ENCODE measurements at regions of chr11 and their contacts with region 1.

Region 1: DNA sequence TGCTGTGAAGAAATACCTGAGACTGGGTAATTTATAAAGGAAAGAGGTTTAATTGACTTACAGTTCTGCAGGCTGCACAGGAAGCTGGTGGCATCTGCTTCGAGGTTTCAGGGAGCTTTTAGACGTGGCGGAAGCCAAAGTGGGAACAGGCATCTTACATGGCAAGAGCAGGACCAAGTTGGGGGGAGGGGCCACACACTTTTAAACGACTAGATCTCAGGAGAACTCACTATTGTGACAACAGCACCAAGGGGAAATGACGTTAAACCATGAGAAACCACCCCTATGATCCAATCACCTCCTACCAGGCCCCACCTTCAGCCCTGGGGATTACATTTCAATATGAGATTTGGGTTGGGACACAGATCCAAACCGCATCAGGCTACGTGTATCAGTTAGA is 11.1 kb upstream of the SCGB1D4 start:
- DNase-seq: no peak
- ATAC-seq: no peak
- H3K4me3 Mint-ChIP-seq: no peak overlapping the region
- H3K27ac Mint-ChIP-seq: no peak overlapping the region
- H3K4me1 Mint-ChIP-seq: peaks cover 9% of the 10 kb centered on the region
- H3K27me3 Mint-ChIP-seq: peaks cover 35% of the 10 kb centered on the region
- CTCF ChIP-seq: no peak

Region 2: GRCh38 chr11:62169091-62169847 is 140.7 kb before region 1 on chr11:
- CTCF ChIA-PET with region 1: interaction called, 30 read pairs
- POLR2A ChIA-PET with region 1: no interaction called
- intact Hi-C with region 1: loop called (anchors 5 kb)
- DNase-seq: no peak
- ATAC-seq: no peak
- H3K4me3 Mint-ChIP-seq: no peak overlapping the region
- H3K27ac Mint-ChIP-seq: no peak overlapping the region
- H3K4me1 Mint-ChIP-seq: peaks cover 4% of the 10 kb centered on the region
- H3K27me3 Mint-ChIP-seq: peaks cover 22% of the 10 kb centered on the region
- CTCF ChIP-seq: no peak

Region 3: GRCh38 chr11:62193952-62194351 is 116.0 kb before region 1 on chr11:
- CTCF ChIA-PET with region 1: interaction called, 14 read pairs
- POLR2A ChIA-PET with region 1: no interaction called
- intact Hi-C with region 1: no loop called
- DNase-seq: no peak
- ATAC-seq: no peak
- H3K4me3 Mint-ChIP-seq: no peak overlapping the region
- H3K27ac Mint-ChIP-seq: no peak overlapping the region
- H3K4me1 Mint-ChIP-seq: no peaks in the 10 kb centered on the region
- H3K27me3 Mint-ChIP-seq: peaks cover 34% of the 10 kb centered on the region
- CTCF ChIP-seq: no peak

Region 4: GRCh38 chr11:62221498-62221897 is 88.5 kb before region 1 on chr11:
- CTCF ChIA-PET with region 1: interaction called, 10 read pairs
- POLR2A ChIA-PET with region 1: no interaction called
- intact Hi-C with region 1: no loop called
- DNase-seq: no peak
- ATAC-seq: no peak
- H3K4me3 Mint-ChIP-seq: no peak overlapping the region
- H3K27ac Mint-ChIP-seq: no peak overlapping the region
- H3K4me1 Mint-ChIP-seq: no peaks in the 10 kb centered on the region
- H3K27me3 Mint-ChIP-seq: no peaks in the 10 kb centered on the region
- CTCF ChIP-seq: no peak

Region 5: GRCh38 chr11:62324738-62325556 is 15.0 kb after region 1 on chr11:
- CTCF ChIA-PET with region 1: interaction called, 35 read pairs
- POLR2A ChIA-PET with region 1: no interaction called
- intact Hi-C with region 1: no loop called
- DNase-seq: peak; percentile 83
- ATAC-seq: peak; percentile 99
- H3K4me3 Mint-ChIP-seq: no peak overlapping the region
- H3K27ac Mint-ChIP-seq: no peak overlapping the region
- H3K4me1 Mint-ChIP-seq: peaks cover 2% of the 10 kb centered on the region
- H3K27me3 Mint-ChIP-seq: peaks cover 5% of the 10 kb centered on the region
- CTCF ChIP-seq: peak; percentile 91

Region 6: GRCh38 chr11:62409831-62410230 is 99.8 kb after region 1 on chr11:
- CTCF ChIA-PET with region 1: no interaction called
- POLR2A ChIA-PET with region 1: no interaction called
- intact Hi-C with region 1: no loop called
- DNase-seq: no peak
- ATAC-seq: no peak
- H3K4me3 Mint-ChIP-seq: no peak overlapping the region
- H3K27ac Mint-ChIP-seq: no peak overlapping the region
- H3K4me1 Mint-ChIP-seq: no peaks in the 10 kb centered on the region
- H3K27me3 Mint-ChIP-seq: no peaks in the 10 kb centered on the region
- CTCF ChIP-seq: no peak